ENCODE measurements at regions of chr20 and their contacts with region 1.

Region 1: DNA sequence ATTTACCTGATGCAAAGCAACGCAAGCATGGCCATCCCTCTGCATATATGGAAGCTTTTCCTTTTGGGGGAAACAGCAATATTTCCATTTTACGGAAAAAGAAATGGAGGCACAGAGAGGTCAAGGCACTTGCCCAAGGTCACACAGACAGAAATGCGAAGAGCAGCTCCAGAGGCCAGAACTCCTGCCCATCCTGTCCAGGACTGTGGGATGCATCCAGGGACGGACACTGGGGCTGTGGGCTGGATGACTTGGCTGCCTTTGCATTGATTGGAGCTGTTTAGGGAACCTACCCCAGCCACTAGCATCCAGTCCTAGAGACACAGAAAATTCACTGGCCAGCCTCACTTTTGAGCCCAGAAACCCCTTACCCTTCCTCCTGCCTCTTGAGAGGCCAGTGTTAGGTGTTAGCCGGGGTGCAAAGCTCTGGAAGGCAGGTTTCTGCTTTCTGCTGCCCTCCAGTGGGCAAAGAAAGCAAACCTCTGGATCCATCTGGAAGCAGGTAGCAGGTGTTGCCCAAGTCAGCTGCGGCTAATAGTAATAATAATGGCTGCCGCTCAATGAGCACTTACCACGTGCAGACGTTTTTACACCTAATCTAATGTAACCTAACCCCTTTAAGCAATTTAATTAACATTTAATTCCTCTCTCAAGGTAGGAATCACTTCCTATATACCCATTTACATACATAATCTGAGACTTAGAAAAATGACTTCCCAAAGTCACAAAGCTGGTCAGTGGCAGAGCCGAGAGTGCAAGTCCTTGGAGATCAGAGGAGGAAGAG is 31.7 kb upstream of the CCN5 start:
- DNase-seq: peak in 1 of 2 donors; percentile 67
- H3K4me3 ChIP-seq: no peak overlapping the region
- H3K27ac ChIP-seq: no peak overlapping the region
- H3K4me1 ChIP-seq: peaks cover 0 to 10% (median 2%) of the 10 kb centered on the region in 4 donors
- H3K27me3 ChIP-seq: no peaks in the 10 kb centered on the region
- CTCF ChIP-seq: peak; percentile 67 to 70

Region 2: GRCh38 chr20:44104798-44105517 is 578.5 kb before region 1 on chr20:
- intact Hi-C with region 1: no loop called
- DNase-seq: no peak
- H3K4me3 ChIP-seq: no peak overlapping the region
- H3K27ac ChIP-seq: no peak overlapping the region
- H3K4me1 ChIP-seq: peaks cover 0 to 10% (median 3%) of the 10 kb centered on the region in 4 donors
- H3K27me3 ChIP-seq: no peaks in the 10 kb centered on the region
- CTCF ChIP-seq: no peak

Region 3: GRCh38 chr20:44733341-44734069 is 50.0 kb after region 1 on chr20:
- intact Hi-C with region 1: loop called (anchors 1 kb)
- DNase-seq: peak; percentile 81 to 90
- H3K4me3 ChIP-seq: no peak overlapping the region
- H3K27ac ChIP-seq: peak overlapping the region; percentile 87 to 92
- H3K4me1 ChIP-seq: peaks cover 0 to 91% (median 50%) of the 10 kb centered on the region in 4 donors
- H3K27me3 ChIP-seq: no peaks in the 10 kb centered on the region
- CTCF ChIP-seq: peak; percentile 96 to 97

Region 4: GRCh38 chr20:44866703-44867335 is 183.4 kb after region 1 on chr20:
- intact Hi-C with region 1: loop called (anchors 5 kb)
- DNase-seq: no peak
- H3K4me3 ChIP-seq: no peak overlapping the region
- H3K27ac ChIP-seq: peak overlapping the region; percentile 16 to 26
- H3K4me1 ChIP-seq: peaks cover 0 to 31% (median 24%) of the 10 kb centered on the region in 4 donors
- H3K27me3 ChIP-seq: no peaks in the 10 kb centered on the region
- CTCF ChIP-seq: no peak